ENCODE measurements at regions of chr15 and their contacts with region 1.

Region 1: DNA sequence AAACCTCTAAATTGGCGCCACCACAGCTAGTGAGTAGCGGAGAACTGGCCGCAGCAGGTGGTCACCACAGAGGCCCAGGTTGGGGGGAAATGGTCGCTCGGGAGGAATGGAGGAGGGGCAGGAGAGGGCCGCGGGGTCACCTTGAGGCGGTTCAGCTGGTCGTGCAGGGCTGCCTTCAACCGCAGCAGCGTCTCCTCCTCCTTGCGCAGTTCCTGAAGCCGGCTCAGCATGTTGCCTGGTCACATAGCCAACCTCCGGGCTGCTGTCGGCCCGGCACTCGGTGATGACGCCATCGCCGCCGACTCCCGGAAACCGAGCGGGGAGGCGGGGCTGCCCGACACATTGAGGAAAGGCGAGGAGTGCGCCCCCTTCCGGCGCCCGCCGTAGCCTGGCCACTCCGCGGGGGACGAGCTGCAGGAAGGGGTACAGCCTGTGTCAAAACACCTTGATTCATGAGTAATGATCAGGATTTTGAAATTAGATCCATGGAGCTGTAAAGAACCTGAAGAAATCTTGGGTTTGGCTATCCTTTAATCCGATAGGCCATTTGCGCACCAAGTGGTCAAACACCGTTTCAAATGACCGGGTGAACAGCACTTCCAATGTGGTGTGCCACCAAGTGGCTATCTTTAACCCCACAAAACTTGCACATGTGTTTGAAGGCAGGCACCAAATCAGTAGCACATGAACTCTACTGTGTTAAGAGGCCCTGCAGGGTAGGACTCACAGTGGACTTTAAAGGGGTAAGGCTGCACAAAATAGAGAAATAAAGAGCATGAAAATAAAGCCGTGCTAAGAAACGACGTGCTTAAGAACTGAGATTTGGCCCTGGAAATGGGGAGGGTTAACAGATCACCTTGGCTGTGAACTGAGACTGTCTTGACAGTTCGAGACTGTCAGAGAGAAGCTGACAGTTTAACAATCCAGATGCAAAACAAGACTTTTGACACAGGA is at the start of gene SNAPC5:
- DNase-seq: peak; percentile 94
- CTCF ChIP-seq: peak; percentile 97

Region 2: GRCh38 chr15:66323312-66323928 is 174.4 kb before region 1 on chr15:
- CTCF ChIA-PET with region 1: interaction called, 10 read pairs
- POLR2A ChIA-PET with region 1: no interaction called
- DNase-seq: no peak
- CTCF ChIP-seq: no peak

Region 3: DNA sequence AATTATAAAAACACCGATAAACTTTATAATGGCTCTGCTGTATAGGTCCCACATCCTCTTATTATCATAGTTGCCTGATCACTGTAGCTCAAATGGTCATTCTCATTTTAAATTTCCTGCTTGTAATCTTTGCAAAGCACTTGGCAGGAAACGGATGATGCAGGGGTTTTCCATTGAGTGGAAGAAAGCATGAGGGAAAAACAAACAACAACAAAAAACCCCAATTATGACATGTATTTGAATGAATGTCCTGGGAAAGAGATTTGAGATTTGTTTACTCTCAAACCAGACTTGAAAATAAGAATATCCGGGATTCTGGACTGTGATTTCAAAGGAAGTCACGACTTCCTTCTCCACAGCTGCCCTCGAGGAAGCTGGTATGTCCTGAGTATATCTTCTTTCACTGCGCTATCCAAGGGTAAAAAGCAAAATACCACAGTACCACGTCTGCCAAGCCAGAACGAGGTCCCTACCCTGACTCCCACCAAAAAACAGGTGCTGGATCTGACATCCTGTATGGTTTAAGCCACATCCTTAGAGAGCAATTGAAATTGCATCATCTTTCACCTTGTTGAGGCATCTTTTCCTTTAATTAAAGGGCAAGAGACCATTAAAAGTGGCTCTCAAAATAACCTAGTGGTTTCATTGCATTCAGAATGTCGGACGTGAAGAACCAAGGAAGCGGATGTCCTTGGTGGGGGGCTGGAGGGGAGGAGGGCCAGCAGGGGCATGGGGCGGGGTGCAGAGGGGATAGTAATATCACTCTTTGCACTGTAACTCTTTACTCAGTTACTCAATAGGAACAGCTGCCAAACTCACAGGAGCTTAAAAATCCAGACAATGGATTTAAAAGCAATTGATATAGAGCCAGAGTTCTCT is 127.8 kb before region 1 on chr15:
- CTCF ChIA-PET with region 1: interaction called, 11 read pairs
- POLR2A ChIA-PET with region 1: no interaction called
- DNase-seq: peak; percentile 53
- CTCF ChIP-seq: no peak

Region 4: GRCh38 chr15:66401130-66402021 is 96.4 kb before region 1 on chr15:
- CTCF ChIA-PET with region 1: interaction called, 19 read pairs
- POLR2A ChIA-PET with region 1: no interaction called
- DNase-seq: no peak
- CTCF ChIP-seq: peak; percentile 33

Measured in GM10248 (cell line).